ENCODE measurements at regions of chr3 and their contacts with region 1.

Region 1: GRCh38 chr3:150603153-150603979 is at the start of gene SELENOT:
- DNase-seq: peak; percentile 96
- ATAC-seq: peak; percentile 91
- H3K4me3 Mint-ChIP-seq: peak within 1 kb of the TSS; percentile 97
- H3K27ac Mint-ChIP-seq: peak within 1 kb of the TSS; percentile 98
- H3K4me1 Mint-ChIP-seq: peaks cover 68% of the 10 kb centered on the region
- H3K27me3 Mint-ChIP-seq: no peaks in the 10 kb centered on the region
- total RNA-seq, gene SELENOT: 88.6 to 134 TPM

Region 2: DNA sequence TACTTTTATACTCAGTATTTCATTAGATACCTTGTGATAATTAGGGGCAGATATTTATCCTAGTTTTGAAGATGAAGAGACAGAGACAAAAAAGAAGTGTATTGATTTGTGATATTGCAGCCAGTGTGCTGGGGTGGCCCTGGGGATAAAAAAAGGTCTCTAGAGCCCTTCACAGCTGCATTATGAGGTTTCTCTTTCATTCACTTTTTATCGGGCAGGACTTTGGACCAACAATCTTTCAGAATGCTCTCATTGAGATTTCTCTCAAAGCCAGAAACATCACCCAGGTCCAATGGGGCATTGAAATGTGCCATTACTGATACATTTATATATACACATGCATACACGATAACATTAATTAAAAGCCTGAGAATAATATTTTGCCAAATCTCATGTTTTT is 20.7 kb before region 1 on chr3:
- CTCF ChIA-PET with region 1: interaction called, 4 read pairs
- POLR2A ChIA-PET with region 1: interaction called, 3 read pairs
- intact Hi-C with region 1: loop called in 1 of 2 experiments (anchors 1 kb)
- DNase-seq: no peak
- ATAC-seq: peak; percentile 23
- H3K4me3 Mint-ChIP-seq: no peak overlapping the region
- H3K27ac Mint-ChIP-seq: peak overlapping the region; percentile 76
- H3K4me1 Mint-ChIP-seq: peaks cover 11% of the 10 kb centered on the region
- H3K27me3 Mint-ChIP-seq: no peaks in the 10 kb centered on the region

Region 3: GRCh38 chr3:150681057-150681456 is 77.7 kb after region 1 on chr3:
- CTCF ChIA-PET with region 1: no interaction called
- POLR2A ChIA-PET with region 1: no interaction called
- intact Hi-C with region 1: loop called in 1 of 2 experiments (anchors 1 kb)
- DNase-seq: no peak
- ATAC-seq: peak; percentile 98
- H3K4me3 Mint-ChIP-seq: peak overlapping the region; percentile 37
- H3K27ac Mint-ChIP-seq: peak overlapping the region; percentile 53
- H3K4me1 Mint-ChIP-seq: peaks cover 23% of the 10 kb centered on the region
- H3K27me3 Mint-ChIP-seq: no peaks in the 10 kb centered on the region

Region 4: GRCh38 chr3:150703299-150704134 is 100.2 kb after region 1 on chr3 and contains the start of gene ERICH6:
- CTCF ChIA-PET with region 1: no interaction called
- POLR2A ChIA-PET with region 1: interaction called, 14 read pairs
- intact Hi-C with region 1: loop called (anchors 1 to 2 kb)
- DNase-seq: peak; percentile 93
- ATAC-seq: peak; percentile 96
- H3K4me3 Mint-ChIP-seq: peak within 1 kb of the TSS; percentile 87
- H3K27ac Mint-ChIP-seq: peak within 1 kb of the TSS; percentile 91
- H3K4me1 Mint-ChIP-seq: peaks cover 31% of the 10 kb centered on the region
- H3K27me3 Mint-ChIP-seq: no peaks in the 10 kb centered on the region
- total RNA-seq, gene ERICH6: 0.58 TPM in 1 of 2 experiments, not detected in the other

Region 5: DNA sequence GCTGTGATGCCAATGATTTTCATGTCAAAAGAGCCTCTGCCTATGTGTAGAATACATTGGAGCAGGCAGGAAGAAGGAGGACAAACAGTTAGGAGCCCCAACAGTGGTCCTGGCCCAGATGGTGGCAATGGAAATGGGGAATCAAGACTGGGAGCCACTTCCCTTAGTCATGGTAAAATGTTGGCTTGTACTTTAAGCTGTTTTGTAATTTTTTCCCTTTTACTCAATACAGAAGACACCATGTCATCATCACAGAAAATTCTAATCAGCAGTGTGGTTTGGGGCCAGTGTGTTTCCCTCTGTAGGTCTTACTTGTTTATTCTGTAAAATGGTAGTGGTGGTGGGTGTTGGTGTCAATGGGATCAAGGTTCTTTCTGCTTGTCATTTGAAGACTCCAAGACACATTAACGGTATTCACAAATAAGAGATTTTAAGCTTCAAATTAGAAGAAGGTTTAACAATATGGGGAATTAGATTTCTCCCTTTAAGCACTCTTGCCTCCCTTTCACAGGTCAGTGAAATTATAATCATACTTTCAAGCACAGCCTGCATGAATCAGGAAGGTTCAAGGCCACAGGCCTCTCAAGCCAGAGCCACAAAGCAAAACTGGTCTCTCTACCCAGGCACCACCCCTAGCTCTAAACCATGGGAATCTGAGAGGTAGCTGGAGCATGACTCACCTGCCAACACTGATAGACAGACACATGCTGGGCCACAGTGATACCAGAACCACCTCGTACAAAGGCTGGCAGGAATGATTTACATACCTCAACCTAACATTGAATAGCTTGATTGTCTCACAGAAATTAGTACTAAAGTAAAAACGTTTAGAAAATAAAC is 134.7 kb after region 1 on chr3:
- CTCF ChIA-PET with region 1: interaction called, 4 read pairs
- POLR2A ChIA-PET with region 1: interaction called, 4 read pairs
- intact Hi-C with region 1: loop called in 1 of 2 experiments (anchors 1 kb)
- DNase-seq: peak; percentile 77
- ATAC-seq: peak; percentile 73
- H3K4me3 Mint-ChIP-seq: peak overlapping the region; percentile 40
- H3K27ac Mint-ChIP-seq: peak overlapping the region; percentile 93
- H3K4me1 Mint-ChIP-seq: peaks cover 72% of the 10 kb centered on the region
- H3K27me3 Mint-ChIP-seq: no peaks in the 10 kb centered on the region

Region 6: DNA sequence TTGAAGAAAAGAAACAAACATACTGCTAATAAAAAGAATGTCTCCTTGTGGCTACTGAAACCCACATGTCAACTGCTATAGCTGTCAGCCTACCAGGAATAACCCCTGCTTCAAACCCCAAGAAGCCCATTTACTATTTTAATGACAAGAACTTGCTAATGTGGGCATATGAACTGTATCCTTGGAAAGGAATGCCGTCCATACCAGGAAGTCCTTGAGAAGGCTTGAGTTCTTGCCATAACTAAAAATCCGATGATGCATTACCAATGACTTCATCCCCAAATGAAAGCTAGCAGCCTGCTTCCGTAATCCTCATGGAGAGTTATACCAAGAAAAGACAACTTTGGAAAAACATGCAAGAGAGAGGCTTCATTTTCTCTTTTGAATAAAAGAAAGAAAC is 267.0 kb after region 1 on chr3:
- CTCF ChIA-PET with region 1: no interaction called
- POLR2A ChIA-PET with region 1: no interaction called
- intact Hi-C with region 1: loop called in 1 of 2 experiments (anchors 10 kb)
- DNase-seq: no peak
- ATAC-seq: no peak
- H3K4me3 Mint-ChIP-seq: no peak overlapping the region
- H3K27ac Mint-ChIP-seq: no peak overlapping the region
- H3K4me1 Mint-ChIP-seq: peaks cover 2% of the 10 kb centered on the region
- H3K27me3 Mint-ChIP-seq: peaks cover 15% of the 10 kb centered on the region